ENCODE measurements at regions of chr19 and their contacts with region 1.

Region 1: DNA sequence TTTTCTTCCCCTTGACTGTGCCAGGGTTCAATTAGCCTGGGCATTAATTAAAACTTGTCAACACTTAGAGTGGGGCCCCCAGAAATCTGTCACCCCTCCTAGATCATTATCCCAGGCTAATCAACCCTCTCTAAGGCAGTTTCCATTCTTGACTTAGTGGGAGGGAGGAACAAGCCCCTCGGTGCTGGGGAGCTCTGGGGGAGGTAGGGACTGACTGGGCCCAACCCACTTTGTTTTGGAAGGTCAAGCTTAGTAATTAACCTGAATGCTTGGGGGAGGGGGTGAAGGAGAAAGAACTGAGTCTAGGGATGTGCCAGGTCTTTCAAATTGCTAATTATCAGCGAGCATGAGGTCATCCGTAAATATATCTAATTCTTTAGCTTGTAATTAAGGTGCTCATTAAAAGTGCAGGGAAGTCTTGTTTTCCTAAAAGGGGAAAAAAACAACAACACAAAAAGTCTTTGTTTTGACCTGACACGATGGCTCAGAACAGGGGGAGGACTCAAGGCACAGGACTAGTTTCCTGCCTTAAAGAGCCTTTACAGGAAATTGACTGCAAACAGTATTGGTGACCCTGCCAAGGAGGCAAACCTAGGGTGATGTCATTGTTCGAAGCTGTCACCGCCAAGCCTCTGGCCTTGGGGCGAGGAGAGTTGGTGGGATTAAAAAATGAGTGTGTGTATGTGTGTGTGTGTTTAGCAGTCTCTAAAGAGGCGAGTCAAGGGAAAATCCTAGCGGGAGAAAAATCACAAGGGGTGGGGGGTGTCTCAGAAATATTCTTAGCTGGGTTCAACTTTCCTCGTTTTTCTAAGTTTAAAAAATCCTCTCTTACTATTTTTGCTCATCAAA is 19.4 kb downstream of the ACTN4 start:
- DNase-seq: no peak
- H3K4me3 ChIP-seq: no peak overlapping the region
- H3K27me3 ChIP-seq: no peaks in the 10 kb centered on the region
- CTCF ChIP-seq: no peak

Region 2: GRCh38 chr19:38107129-38107528 is 559.8 kb before region 1 on chr19:
- CTCF ChIA-PET with region 1: no interaction called
- POLR2A ChIA-PET with region 1: interaction called, 11 read pairs
- DNase-seq: no peak
- H3K4me3 ChIP-seq: no peak overlapping the region
- H3K27me3 ChIP-seq: no peaks in the 10 kb centered on the region
- CTCF ChIP-seq: no peak

Region 3: DNA sequence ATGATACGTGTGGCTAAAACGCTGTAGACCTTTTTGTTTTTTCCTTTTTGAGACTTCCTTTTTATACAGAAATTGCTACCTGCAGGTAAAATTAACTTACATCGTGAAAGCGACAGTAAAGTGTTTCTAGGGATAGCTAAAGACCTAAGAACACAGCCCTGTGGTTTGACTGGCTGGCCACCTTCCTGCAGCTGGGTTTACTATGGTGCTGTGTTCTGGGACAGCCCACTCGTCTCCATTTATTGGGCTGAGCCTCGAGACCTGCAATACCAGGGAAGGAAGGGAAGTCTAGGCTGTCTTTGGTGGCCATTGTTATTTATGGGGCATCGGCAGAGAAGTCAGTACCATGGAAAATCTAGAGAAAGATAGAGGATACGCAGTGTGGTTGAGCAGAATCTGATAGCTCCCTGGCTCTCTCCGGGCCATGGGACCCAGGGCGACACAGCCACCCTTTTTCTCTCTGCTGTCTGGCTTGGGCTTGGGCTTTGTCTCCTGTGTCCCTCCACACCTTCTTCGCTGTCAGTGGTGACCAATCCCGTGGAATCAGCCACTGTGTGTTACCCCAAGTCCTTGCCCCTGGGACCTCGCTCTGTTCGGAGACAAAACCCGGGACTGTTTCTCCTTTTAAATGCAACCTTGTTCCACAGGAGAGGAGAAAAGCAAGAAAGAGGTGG is 11.5 kb after region 1 on chr19:
- CTCF ChIA-PET with region 1: no interaction called
- POLR2A ChIA-PET with region 1: no interaction called
- DNase-seq: no peak
- H3K4me3 ChIP-seq: no peak overlapping the region
- H3K27me3 ChIP-seq: no peaks in the 10 kb centered on the region
- CTCF ChIP-seq: no peak

Region 4: DNA sequence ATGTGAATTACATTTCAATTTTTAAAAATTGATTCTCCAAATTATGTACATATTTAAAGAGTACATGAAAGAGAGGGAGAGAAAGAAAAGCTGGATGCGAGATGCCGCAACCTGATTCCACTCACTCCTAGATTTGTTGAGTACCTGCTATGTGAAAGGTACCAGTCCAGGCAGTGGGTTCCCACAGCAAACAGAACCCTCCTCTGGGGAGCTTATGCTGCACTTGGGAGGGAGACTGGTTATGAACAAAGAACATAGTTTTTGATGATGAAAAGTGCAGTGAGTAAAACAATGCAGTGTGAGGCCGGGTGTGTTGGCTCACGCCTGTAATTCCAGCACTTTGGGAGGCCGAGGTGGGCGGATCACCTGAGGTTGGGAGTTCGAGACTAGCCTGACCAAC is 23.9 kb after region 1 on chr19:
- CTCF ChIA-PET with region 1: interaction called, 5 read pairs
- POLR2A ChIA-PET with region 1: interaction called, 17 read pairs
- DNase-seq: no peak
- H3K4me3 ChIP-seq: no peak overlapping the region
- H3K27me3 ChIP-seq: no peaks in the 10 kb centered on the region
- CTCF ChIP-seq: no peak

Measured in BJ (cell line).